ENCODE measurements at regions of chr11 and their contacts with region 1.

Region 1: DNA sequence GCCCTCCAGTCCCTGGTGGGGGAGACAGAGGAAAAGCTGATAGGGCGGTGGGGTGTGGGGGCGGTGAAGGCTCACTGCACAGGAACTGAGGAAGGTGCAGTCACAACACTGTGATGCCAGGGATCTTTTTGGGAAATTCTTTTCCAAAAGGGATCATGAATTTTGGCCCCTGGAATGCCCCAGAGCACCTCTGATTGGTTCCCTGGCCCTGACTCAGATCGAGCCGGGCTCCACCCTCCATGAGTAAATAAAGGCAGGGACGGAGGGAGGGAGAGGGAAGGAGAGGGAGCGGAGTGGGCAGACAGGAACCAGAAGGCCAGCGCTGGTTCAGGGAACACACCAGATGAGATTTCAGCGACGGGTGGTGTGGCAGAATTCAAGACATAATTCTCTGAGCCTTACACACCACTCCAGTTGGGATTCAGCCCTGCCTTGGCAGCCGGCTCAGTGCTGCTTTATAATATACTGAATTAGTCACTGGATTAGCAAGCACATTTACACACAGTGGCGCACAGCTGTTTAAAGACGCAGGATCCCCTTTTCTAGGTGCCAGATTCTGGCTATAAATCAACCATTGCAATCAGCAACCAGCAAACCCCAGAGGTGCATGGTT is 80.3 kb downstream of the ETS1 start:
- DNase-seq: peak in 7 of 14 experiments; percentile 38 to 62 (median 53)
- ATAC-seq: peak; percentile 28
- H3K4me3 ChIP-seq: peak overlapping the region; percentile 89
- H3K4me3 Mint-ChIP-seq: peak overlapping the region; percentile 93
- H3K27ac ChIP-seq: peak overlapping the region; percentile 68 to 93
- H3K27ac Mint-ChIP-seq: peak overlapping the region; percentile 99
- H3K4me1 ChIP-seq: peaks cover 86% of the 10 kb centered on the region
- H3K4me1 Mint-ChIP-seq: peaks cover 100% of the 10 kb centered on the region
- H3K27me3 ChIP-seq: no peaks in the 10 kb centered on the region
- H3K27me3 Mint-ChIP-seq: no peaks in the 10 kb centered on the region
- CTCF ChIP-seq: no peak

Region 2: GRCh38 chr11:128039140-128040021 is 467.7 kb before region 1 on chr11:
- CTCF ChIA-PET with region 1: no interaction called
- POLR2A ChIA-PET with region 1: interaction called, 3 read pairs
- intact Hi-C with region 1: loop called in 1 of 2 experiments (anchors 10 kb)
- DNase-seq: peak; percentile 55 to 94 (median 72)
- ATAC-seq: peak; percentile 96
- H3K4me3 ChIP-seq: peak overlapping the region; percentile 47
- H3K4me3 Mint-ChIP-seq: peak overlapping the region; percentile 72
- H3K27ac ChIP-seq: peak overlapping the region; percentile 29 to 50
- H3K27ac Mint-ChIP-seq: no peak overlapping the region
- H3K4me1 ChIP-seq: peaks cover 64% of the 10 kb centered on the region
- H3K4me1 Mint-ChIP-seq: peaks cover 59% of the 10 kb centered on the region
- H3K27me3 ChIP-seq: no peaks in the 10 kb centered on the region
- H3K27me3 Mint-ChIP-seq: no peaks in the 10 kb centered on the region
- CTCF ChIP-seq: peak; percentile 8

Region 3: GRCh38 chr11:128302425-128303186 is 204.5 kb before region 1 on chr11:
- CTCF ChIA-PET with region 1: no interaction called
- POLR2A ChIA-PET with region 1: interaction called, 18 read pairs
- intact Hi-C with region 1: no loop called
- DNase-seq: peak; percentile 49 to 97 (median 65)
- ATAC-seq: peak; percentile 85
- H3K4me3 ChIP-seq: peak overlapping the region; percentile 65
- H3K4me3 Mint-ChIP-seq: peak overlapping the region; percentile 94
- H3K27ac ChIP-seq: peak overlapping the region; percentile 90 to 94
- H3K27ac Mint-ChIP-seq: peak overlapping the region; percentile 100
- H3K4me1 ChIP-seq: peaks cover 82% of the 10 kb centered on the region
- H3K4me1 Mint-ChIP-seq: peaks cover 98% of the 10 kb centered on the region
- H3K27me3 ChIP-seq: no peaks in the 10 kb centered on the region
- H3K27me3 Mint-ChIP-seq: no peaks in the 10 kb centered on the region
- CTCF ChIP-seq: peak; percentile 46

Region 4: GRCh38 chr11:128463371-128463829 is 43.7 kb before region 1 on chr11:
- CTCF ChIA-PET with region 1: interaction called, 7 read pairs
- POLR2A ChIA-PET with region 1: interaction called, 449 read pairs
- intact Hi-C with region 1: loop called (anchors 2 kb)
- DNase-seq: peak in 2 of 14 experiments; percentile 3 to 17
- ATAC-seq: no peak
- H3K4me3 ChIP-seq: no peak overlapping the region
- H3K4me3 Mint-ChIP-seq: peak overlapping the region; percentile 82
- H3K27ac ChIP-seq: peak overlapping the region; percentile 92 to 94
- H3K27ac Mint-ChIP-seq: peak overlapping the region; percentile 99
- H3K4me1 ChIP-seq: peaks cover 73% of the 10 kb centered on the region
- H3K4me1 Mint-ChIP-seq: peaks cover 96% of the 10 kb centered on the region
- H3K27me3 ChIP-seq: no peaks in the 10 kb centered on the region
- H3K27me3 Mint-ChIP-seq: no peaks in the 10 kb centered on the region
- CTCF ChIP-seq: no peak

Region 5: GRCh38 chr11:128488471-128488870 is 18.6 kb before region 1 on chr11:
- CTCF ChIA-PET with region 1: interaction called, 25 read pairs
- POLR2A ChIA-PET with region 1: interaction called, 611 read pairs
- intact Hi-C with region 1: no loop called
- DNase-seq: peak in 3 of 14 experiments; percentile 28 to 57 (median 40)
- ATAC-seq: peak; percentile 57
- H3K4me3 ChIP-seq: peak overlapping the region; percentile 13
- H3K4me3 Mint-ChIP-seq: peak overlapping the region; percentile 74
- H3K27ac ChIP-seq: peak overlapping the region; percentile 52 to 94
- H3K27ac Mint-ChIP-seq: peak overlapping the region; percentile 99
- H3K4me1 ChIP-seq: peaks cover 96% of the 10 kb centered on the region
- H3K4me1 Mint-ChIP-seq: peaks cover 98% of the 10 kb centered on the region
- H3K27me3 ChIP-seq: no peaks in the 10 kb centered on the region
- H3K27me3 Mint-ChIP-seq: no peaks in the 10 kb centered on the region
- CTCF ChIP-seq: no peak

Region 6: GRCh38 chr11:128695539-128696221 is 188.6 kb after region 1 on chr11:
- CTCF ChIA-PET with region 1: no interaction called
- POLR2A ChIA-PET with region 1: interaction called, 6 read pairs
- intact Hi-C with region 1: loop called in 1 of 2 experiments (anchors 5 kb)
- DNase-seq: peak in 5 of 14 experiments; percentile 33 to 84 (median 73)
- ATAC-seq: peak; percentile 54
- H3K4me3 ChIP-seq: peak overlapping the region; percentile 69
- H3K4me3 Mint-ChIP-seq: peak overlapping the region; percentile 92
- H3K27ac ChIP-seq: peak overlapping the region; percentile 60 to 89
- H3K27ac Mint-ChIP-seq: peak overlapping the region; percentile 90
- H3K4me1 ChIP-seq: peaks cover 70% of the 10 kb centered on the region
- H3K4me1 Mint-ChIP-seq: peaks cover 78% of the 10 kb centered on the region
- H3K27me3 ChIP-seq: peaks cover 0 to under 1% of the 10 kb centered on the region in 2 experiments
- H3K27me3 Mint-ChIP-seq: peaks cover 16% of the 10 kb centered on the region
- CTCF ChIP-seq: no peak